ENCODE measurements at regions of chr4 and their contacts with region 1.

Region 1: DNA sequence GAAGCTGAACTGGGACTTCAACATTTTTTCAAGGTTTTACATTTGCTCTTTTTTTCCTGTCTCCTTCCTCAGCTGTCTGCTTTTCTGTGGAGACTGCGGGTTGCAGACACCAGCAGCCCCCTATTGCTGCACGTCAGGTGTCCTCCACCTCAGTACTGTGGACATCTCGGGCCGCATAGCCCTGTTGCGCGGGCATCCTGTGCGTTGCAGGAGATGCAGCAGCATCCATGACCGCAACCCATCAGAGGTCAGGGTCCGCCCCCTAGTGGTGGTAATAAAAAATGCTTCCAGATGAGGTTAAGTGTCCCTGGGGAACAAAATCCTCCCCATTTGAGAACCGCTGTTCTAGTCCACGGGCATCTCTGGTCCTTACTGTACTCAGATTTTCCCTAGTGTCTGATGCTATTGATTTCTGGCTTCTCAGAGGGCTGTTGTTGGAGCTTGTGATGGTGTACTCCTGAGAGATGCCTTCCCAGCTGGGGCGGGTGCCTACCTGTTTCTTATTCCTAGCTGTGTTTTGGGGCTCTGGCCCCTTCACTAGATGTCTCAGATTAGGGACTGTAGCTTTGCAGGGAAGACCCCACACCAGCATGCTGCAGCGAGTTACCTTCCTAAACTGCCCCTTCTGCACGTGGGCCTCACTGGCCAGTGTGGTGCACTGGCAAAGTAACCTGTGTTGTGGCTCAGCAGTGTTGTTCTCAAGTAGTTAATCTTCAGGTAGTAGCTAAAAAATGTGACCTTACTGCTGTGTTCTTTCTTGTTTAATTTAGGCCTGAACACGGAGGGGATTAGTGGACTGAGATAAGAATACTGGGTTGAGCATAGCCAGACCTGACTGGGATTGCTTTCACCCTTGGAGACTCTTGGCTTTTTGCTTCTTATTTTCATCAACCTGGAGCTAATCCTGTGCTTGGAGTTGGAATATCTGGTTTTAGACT is 28.2 kb downstream of the NSD2 start:
- DNase-seq: peak; percentile 81
- H3K4me3 Mint-ChIP-seq: no peak overlapping the region
- H3K27ac Mint-ChIP-seq: no peak overlapping the region
- H3K4me1 Mint-ChIP-seq: peaks cover 29% of the 10 kb centered on the region
- H3K27me3 Mint-ChIP-seq: no peaks in the 10 kb centered on the region

Region 2: DNA sequence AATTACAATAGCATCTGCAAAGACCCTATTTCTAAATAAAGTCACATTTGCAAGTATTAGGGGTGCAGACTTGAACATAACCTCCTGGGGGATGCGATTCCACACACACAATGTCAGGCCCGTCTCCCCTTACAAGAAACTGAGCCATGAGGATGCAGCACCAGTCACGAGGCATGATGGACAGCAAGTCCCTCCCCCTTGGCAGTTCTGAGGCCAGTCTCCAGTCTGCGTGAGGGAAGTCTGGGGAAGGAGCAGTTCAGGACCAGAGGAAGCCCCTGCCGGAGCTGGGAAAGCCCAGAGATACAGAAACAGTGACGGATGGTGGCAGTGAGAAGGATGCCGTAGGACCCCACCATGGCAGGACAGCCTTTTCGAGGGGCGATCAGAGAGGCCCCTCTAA is 224.7 kb before region 1 on chr4:
- CTCF ChIA-PET with region 1: no interaction called
- POLR2A ChIA-PET with region 1: no interaction called
- intact Hi-C with region 1: no loop called
- DNase-seq: no peak
- H3K4me3 Mint-ChIP-seq: no peak overlapping the region
- H3K27ac Mint-ChIP-seq: no peak overlapping the region
- H3K4me1 Mint-ChIP-seq: no peaks in the 10 kb centered on the region
- H3K27me3 Mint-ChIP-seq: no peaks in the 10 kb centered on the region

Region 3: GRCh38 chr4:1843852-1844251 is 55.6 kb before region 1 on chr4:
- CTCF ChIA-PET with region 1: interaction called, 25 read pairs
- POLR2A ChIA-PET with region 1: no interaction called
- intact Hi-C with region 1: no loop called
- DNase-seq: no peak
- H3K4me3 Mint-ChIP-seq: no peak overlapping the region
- H3K27ac Mint-ChIP-seq: no peak overlapping the region
- H3K4me1 Mint-ChIP-seq: no peaks in the 10 kb centered on the region
- H3K27me3 Mint-ChIP-seq: no peaks in the 10 kb centered on the region

Region 4: GRCh38 chr4:1862055-1862926 is 37.1 kb before region 1 on chr4:
- CTCF ChIA-PET with region 1: interaction called, 55 read pairs
- POLR2A ChIA-PET with region 1: no interaction called
- intact Hi-C with region 1: no loop called
- DNase-seq: peak; percentile 24
- H3K4me3 Mint-ChIP-seq: peak overlapping the region; percentile 50
- H3K27ac Mint-ChIP-seq: no peak overlapping the region
- H3K4me1 Mint-ChIP-seq: peaks cover 22% of the 10 kb centered on the region
- H3K27me3 Mint-ChIP-seq: no peaks in the 10 kb centered on the region

Region 5: DNA sequence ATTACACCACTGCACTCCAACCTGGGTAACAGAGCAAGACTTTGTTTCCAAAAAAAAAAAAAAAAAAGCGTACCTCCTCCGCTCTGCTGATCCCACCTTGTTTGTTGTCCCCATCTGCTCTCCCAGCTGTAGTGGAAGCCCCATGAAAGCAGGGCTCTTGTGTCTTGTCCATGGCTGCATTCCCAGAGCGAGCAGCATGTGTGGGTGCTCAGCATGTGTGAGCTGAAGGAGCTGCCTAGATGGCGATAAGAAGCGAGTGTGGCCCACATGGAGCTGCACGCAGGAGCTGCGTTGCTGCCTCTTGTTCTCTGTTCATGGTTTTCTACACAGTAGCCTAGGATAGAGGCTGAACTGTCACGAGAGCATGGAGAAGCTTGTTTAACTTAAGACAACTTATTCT is 15.8 kb before region 1 on chr4:
- CTCF ChIA-PET with region 1: interaction called, 31 read pairs
- POLR2A ChIA-PET with region 1: no interaction called
- intact Hi-C with region 1: no loop called
- DNase-seq: no peak
- H3K4me3 Mint-ChIP-seq: no peak overlapping the region
- H3K27ac Mint-ChIP-seq: no peak overlapping the region
- H3K4me1 Mint-ChIP-seq: peaks cover 35% of the 10 kb centered on the region
- H3K27me3 Mint-ChIP-seq: no peaks in the 10 kb centered on the region

Region 6: GRCh38 chr4:1976416-1977352 is 77.3 kb after region 1 on chr4:
- CTCF ChIA-PET with region 1: no interaction called
- POLR2A ChIA-PET with region 1: no interaction called
- intact Hi-C with region 1: no loop called
- DNase-seq: no peak
- H3K4me3 Mint-ChIP-seq: no peak overlapping the region
- H3K27ac Mint-ChIP-seq: no peak overlapping the region
- H3K4me1 Mint-ChIP-seq: no peaks in the 10 kb centered on the region
- H3K27me3 Mint-ChIP-seq: no peaks in the 10 kb centered on the region

Measured in activated CD4-positive, alpha-beta memory T cell treated with anti-CD3 and anti-CD28 coated beads for 36 hours (primary cell).